ENCODE measurements at regions of chr14 and their contacts with region 1.

Region 1: DNA sequence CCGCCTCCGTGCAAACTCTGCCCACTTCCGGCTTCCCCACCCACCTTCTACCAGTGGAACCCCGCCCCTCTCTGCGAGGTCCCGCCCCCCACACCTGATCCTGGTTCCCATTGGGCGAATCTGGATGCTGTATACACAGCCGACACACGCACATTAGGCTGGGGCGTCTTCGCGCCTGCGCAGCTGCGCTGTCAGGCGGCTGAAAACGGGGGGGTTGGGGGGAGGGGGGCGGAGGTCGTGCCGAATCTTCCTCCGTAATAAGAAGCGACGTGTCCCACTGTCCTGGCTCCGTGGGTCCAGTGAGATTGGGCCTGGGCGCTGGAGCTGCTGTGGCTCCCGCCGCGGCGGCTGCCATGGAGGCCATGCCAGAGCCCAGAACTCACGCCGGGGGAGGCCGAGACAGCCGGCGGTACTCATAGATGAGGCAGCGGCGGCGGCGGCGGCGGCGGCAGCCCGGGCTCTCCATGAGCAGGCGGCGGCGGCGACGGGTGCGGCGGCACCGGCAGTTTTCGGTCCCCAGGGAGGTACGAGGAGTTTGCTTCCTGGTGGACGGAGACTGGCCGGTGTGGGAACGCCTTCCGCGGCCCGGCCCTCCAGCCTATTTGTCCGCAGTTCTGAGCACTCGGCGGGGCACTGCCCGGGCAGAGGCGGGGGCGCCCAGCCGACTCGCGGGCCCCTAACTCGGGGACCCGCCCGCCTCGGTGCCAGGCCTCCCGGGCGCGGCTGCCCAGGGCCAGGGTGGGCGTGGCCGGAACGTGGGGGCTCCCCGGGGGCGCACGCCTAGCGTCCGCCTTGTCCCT is 64.5 kb downstream of the KLHL28 start:
- DNase-seq: peak; percentile 98
- ATAC-seq: peak; percentile 93
- H3K4me3 ChIP-seq: peak overlapping the region; percentile 81
- H3K27ac ChIP-seq: peak overlapping the region; percentile 68
- H3K4me1 ChIP-seq: peaks cover 16% of the 10 kb centered on the region
- H3K27me3 ChIP-seq: no peaks in the 10 kb centered on the region
- CTCF ChIP-seq: no peak

Region 2: DNA sequence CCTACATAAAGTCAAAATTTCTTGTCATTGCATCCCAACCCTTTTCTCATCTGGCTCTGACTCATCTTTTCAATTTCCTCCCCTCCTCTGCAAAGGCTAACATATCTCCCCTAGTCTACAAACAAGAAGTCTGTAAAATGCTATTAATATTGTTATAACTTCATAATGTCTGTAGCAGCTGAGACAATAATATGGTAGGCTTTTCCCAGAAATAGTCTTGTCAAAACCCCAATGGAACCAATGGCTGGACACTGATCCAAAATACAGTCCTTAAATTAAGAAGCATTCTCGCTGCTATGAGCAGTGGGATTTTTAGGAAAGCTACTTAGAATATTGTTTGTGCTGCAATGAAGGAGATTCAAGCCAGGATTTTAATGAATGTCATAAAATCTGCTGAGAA is 66.9 kb before region 1 on chr14:
- CTCF ChIA-PET with region 1: no interaction called
- POLR2A ChIA-PET with region 1: no interaction called
- intact Hi-C with region 1: no loop called
- DNase-seq: no peak
- ATAC-seq: peak; percentile 58
- H3K4me3 ChIP-seq: no peak overlapping the region
- H3K27ac ChIP-seq: no peak overlapping the region
- H3K4me1 ChIP-seq: peaks cover 16% of the 10 kb centered on the region
- H3K27me3 ChIP-seq: no peaks in the 10 kb centered on the region
- CTCF ChIP-seq: no peak

Region 3: DNA sequence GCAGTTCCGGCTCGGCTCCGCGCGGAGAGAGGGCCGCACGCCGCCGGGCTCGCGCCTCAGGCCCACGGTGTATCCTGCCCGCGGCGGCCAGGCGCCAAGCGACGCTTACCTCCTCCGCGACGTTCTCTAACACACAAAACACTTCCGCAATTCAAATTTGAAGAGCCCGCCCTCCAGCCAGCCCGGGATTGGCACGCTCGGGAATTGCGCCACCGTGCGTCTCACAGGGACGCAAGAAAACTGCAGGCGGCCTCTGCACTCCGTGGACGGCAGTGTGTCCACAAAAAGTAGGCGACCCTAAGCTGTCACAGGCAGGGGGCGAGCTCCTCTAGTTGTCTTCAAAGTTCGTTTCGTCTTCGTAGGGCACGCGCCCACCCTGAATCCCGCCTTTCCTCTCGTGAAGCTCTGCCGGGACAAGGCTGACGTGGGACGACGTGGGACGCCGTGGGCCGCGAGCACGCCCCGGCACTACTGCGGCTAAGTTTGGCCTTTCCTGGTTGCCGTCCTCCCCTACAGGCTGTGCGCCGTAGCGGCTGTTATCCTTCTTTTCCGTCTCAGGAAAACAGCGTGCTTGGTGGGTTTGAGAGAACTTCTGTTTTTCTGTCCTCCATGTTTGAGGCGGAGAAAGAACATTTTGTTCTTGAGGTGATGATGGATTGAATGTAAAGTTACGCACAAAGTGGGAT is 356.0 kb after region 1 on chr14 and contains the start of gene MIS18BP1:
- CTCF ChIA-PET with region 1: no interaction called
- POLR2A ChIA-PET with region 1: no interaction called
- intact Hi-C with region 1: loop called (anchors 5 kb)
- DNase-seq: peak; percentile 97
- ATAC-seq: peak; percentile 92
- H3K4me3 ChIP-seq: peak within 1 kb of the TSS; percentile 71
- H3K27ac ChIP-seq: peak within 1 kb of the TSS; percentile 84
- H3K4me1 ChIP-seq: peaks cover 23% of the 10 kb centered on the region
- H3K27me3 ChIP-seq: no peaks in the 10 kb centered on the region
- CTCF ChIP-seq: peak; percentile 82
- total RNA-seq, gene MIS18BP1: 39.3 and 42.3 TPM in 2 replicates